GM12878 (cell line): ENCODE measurements at regions of chr7 and their contacts with region 1.

Region 1: DNA sequence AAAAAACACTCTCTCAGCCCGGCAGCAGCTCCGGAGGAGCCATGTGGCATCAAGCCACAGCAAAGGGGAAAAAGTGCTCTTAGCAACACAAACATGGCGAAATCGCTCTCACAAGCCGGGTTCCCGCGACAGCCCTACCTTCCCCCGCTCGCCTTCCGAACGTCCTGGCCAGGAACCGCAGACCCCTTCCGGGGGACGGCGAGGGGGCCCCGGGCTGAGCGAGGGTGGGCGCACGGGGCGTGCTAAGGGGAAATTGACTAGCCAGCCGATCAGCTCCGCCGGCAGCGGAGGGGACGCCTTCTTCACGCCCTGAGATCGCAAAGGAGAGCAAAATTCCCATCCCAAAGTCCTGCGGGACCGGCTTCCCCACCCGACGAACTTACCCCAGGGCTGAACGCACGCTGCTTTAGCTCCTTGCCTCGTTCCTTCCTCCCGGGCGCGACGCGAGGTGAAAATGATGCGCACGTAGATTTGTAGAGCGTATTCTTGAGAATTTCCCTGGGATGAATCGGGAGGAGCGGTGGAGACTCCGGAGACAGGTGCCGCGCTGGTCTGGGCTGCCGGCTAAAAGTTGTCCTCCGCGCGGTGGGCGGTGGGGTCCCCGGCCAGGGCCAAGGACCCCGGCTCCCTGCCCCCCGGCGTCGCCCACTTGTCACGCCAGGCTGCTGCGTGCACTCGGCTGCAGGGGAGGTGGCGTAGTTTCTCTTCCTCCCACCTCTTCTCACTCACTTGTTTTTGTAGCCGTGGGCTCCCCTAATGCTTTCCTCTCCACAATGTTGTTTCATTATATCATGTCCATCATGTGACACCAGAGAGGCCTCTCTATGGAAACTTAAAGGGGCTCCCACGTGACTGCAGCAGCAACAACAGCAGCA is 220.1 kb upstream of the MKLN1 start:
- DNase-seq: no peak
- ATAC-seq: peak; percentile 61
- H3K4me3 ChIP-seq: peak overlapping the region; percentile 90
- H3K27ac ChIP-seq: peak overlapping the region; percentile 88
- H3K4me1 ChIP-seq: peaks cover 35% of the 10 kb centered on the region
- H3K27me3 ChIP-seq: no peaks in the 10 kb centered on the region
- CTCF ChIP-seq: peak in 1 of 3 experiments; percentile 17; a peak in 1 of 6 replicates
- EP300 ChIP-seq: peak; percentile 92 to 95
- POLR2A ChIP-seq: peak; percentile 92
- RAD21 ChIP-seq: 0 out of 2 replicates have a peak, but pooled peaks have one; percentile 8

Region 2: DNA sequence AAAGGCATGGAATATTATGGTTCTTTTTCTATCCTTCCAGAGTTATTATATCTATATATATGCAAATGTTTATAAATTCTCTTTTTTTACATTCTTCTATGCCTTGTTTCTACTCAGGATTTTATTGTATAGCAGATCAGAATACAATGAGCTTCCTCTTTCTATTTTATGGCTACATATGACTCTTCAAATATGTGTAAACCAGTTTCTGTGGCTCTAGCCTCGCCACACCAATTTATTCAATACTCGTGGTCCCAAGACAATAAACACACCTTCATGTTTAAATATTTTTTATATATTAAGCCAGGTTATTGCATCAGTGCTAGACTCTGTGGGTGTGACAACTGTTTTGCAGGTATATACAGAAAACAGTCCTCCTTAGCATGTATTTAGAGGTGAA is 17.4 kb before region 1 on chr7:
- CTCF ChIA-PET with region 1: interaction called, 4 read pairs
- POLR2A ChIA-PET with region 1: interaction called, 7 read pairs
- RAD21 ChIA-PET with region 1: interaction called, 17 read pairs
- SMC1A ChIA-PET with region 1: interaction called, 11 read pairs
- in situ Hi-C with region 1: no loop called
- intact Hi-C with region 1: no loop called
- DNase-seq: no peak
- ATAC-seq: peak; percentile 55
- H3K4me3 ChIP-seq: no peak overlapping the region
- H3K27ac ChIP-seq: no peak overlapping the region
- H3K4me1 ChIP-seq: peaks cover 12% of the 10 kb centered on the region
- H3K27me3 ChIP-seq: no peaks in the 10 kb centered on the region
- CTCF ChIP-seq: no peak
- EP300 ChIP-seq: no peak
- POLR2A ChIP-seq: no peak
- RAD21 ChIP-seq: no peak

Region 3: GRCh38 chr7:131124001-131124629 is 16.5 kb after region 1 on chr7:
- CTCF ChIA-PET with region 1: interaction called, 51 read pairs
- POLR2A ChIA-PET with region 1: interaction called, 110 read pairs
- RAD21 ChIA-PET with region 1: interaction called, 136 read pairs
- SMC1A ChIA-PET with region 1: interaction called, 152 read pairs
- in situ Hi-C with region 1: no loop called
- intact Hi-C with region 1: loop called (anchors 1 kb)
- DNase-seq: peak; percentile 92
- ATAC-seq: peak; percentile 92
- H3K4me3 ChIP-seq: 0 out of 2 replicates have a peak overlapping the region, but pooled peaks have one; percentile 17
- H3K27ac ChIP-seq: peak overlapping the region; percentile 77
- H3K4me1 ChIP-seq: peaks cover 24% of the 10 kb centered on the region
- H3K27me3 ChIP-seq: no peaks in the 10 kb centered on the region
- CTCF ChIP-seq: no peak
- EP300 ChIP-seq: peak; percentile 89 to 97; a peak in 3 of 4 replicates
- POLR2A ChIP-seq: peak; percentile 60; the same call in 1 of the 2 replicates
- RAD21 ChIP-seq: no peak; the same call in 1 of the 2 replicates

Region 4: DNA sequence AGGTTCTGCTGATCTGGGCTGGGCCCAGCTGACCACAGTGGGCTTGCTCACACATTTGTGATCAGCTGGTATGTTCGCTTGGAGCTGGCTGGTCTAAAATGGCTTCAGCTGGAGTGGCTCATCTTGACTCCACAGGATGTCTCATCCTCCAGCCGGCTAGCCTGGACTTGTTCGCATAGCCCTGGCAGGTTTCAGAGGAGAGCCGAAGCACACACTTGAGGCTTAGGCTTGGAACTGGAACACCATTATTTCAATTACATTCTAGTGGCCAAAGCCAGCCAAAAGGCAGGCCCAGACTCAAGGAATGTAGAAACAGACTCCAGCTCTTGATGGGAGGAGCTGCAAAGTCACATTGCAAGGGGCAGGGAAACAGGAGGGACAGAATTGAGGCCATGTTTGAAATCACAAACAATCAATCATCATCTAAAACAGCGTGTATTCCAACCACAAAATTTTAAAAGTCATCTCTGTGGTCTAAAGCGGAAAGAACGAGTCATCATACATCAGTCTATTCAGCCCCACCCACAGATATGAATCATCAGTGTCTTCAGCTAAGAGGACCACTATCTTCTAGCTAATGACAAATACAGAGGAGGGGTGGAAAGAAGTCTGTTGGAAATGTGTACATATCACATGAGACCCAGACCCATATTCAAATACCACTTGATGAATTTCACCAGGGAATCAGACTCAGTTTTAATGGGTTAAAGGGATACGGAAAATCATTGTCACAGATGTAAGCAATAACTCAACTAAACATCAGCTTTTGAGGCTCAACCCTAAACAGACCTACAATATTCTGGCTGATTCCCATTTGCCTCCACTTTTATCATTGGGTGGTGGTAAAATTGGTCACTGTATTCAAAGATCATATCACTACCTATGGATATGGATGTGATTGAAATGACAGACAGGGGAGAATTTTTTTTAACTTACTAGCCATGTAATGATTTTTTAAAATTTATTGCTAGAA is 81.1 kb after region 1 on chr7:
- CTCF ChIA-PET with region 1: interaction called, 4 read pairs
- POLR2A ChIA-PET with region 1: interaction called, 6 read pairs
- RAD21 ChIA-PET with region 1: interaction called, 30 read pairs
- SMC1A ChIA-PET with region 1: interaction called, 8 read pairs
- in situ Hi-C with region 1: no loop called
- intact Hi-C with region 1: no loop called
- DNase-seq: peak; percentile 61
- ATAC-seq: peak; percentile 97
- H3K4me3 ChIP-seq: no peak overlapping the region
- H3K27ac ChIP-seq: no peak overlapping the region
- H3K4me1 ChIP-seq: peaks cover 13% of the 10 kb centered on the region
- H3K27me3 ChIP-seq: no peaks in the 10 kb centered on the region
- CTCF ChIP-seq: no peak
- EP300 ChIP-seq: peak in 1 of 2 experiments; percentile 58; a peak in 1 of 4 replicates
- POLR2A ChIP-seq: no peak
- RAD21 ChIP-seq: no peak

Region 5: DNA sequence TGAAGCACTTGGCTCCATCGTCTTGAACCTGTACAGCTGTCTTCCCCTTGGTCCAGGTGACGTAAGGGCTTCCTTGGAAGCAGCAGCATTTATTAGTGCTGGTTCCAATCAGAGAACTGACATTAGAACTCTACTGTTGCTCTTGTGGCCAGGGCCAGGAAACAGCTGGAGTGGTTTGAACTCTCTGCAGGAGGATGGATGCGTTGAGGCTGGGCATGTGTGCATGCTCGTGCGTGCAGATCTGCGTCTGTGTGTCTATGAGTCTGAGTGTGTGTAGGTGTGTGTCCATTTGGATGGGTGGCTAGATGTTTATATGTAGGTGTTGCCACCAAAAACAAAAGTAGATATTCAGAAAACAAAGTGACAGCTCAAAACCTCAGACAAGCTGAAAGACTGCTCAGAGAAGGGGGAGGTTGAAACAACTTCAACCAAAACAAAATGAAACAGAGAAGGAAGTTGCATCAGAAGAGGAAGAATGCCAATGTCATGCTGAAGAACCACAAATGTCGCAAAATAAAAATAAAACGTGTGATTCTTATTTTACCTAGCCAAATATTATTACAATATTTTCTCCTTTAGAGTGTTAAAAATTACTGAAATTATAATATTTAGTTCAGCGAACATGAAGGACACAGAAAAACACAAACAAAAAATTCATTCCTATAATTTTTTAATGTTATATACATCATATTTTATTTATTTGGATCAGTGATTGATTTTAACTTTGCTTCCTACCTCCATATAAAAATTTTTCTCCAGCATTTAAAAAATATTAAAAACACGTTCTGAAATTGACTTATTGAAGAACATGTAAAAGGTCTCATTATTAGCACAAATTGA is 124.0 kb after region 1 on chr7:
- CTCF ChIA-PET with region 1: interaction called, 5 read pairs
- POLR2A ChIA-PET with region 1: interaction called, 3 read pairs
- RAD21 ChIA-PET with region 1: interaction called, 11 read pairs
- SMC1A ChIA-PET with region 1: interaction called, 10 read pairs
- in situ Hi-C with region 1: no loop called
- intact Hi-C with region 1: loop called (anchors 5 kb)
- DNase-seq: peak; percentile 82
- ATAC-seq: peak; percentile 90
- H3K4me3 ChIP-seq: 0 out of 2 replicates have a peak overlapping the region, but pooled peaks have one; percentile 44
- H3K27ac ChIP-seq: peak overlapping the region; percentile 47
- H3K4me1 ChIP-seq: peaks cover 3% of the 10 kb centered on the region; the same call in 1 of the 2 replicates
- H3K27me3 ChIP-seq: no peaks in the 10 kb centered on the region
- CTCF ChIP-seq: no peak
- EP300 ChIP-seq: peak; percentile 60 to 80; a peak in 2 of 4 replicates
- POLR2A ChIP-seq: peak; percentile 65; the same call in 1 of the 2 replicates
- RAD21 ChIP-seq: peak; percentile 3; the same call in 1 of the 2 replicates

Region 6: GRCh38 chr7:131327626-131328376 is 220.2 kb after region 1 on chr7 and contains the start of gene MKLN1:
- CTCF ChIA-PET with region 1: interaction called, 3 read pairs
- POLR2A ChIA-PET with region 1: interaction called, 12 read pairs
- RAD21 ChIA-PET with region 1: interaction called, 11 read pairs
- SMC1A ChIA-PET with region 1: interaction called, 12 read pairs
- in situ Hi-C with region 1: no loop called
- intact Hi-C with region 1: loop called (anchors 5 kb)
- DNase-seq: peak; percentile 35
- ATAC-seq: peak; percentile 95
- H3K4me3 ChIP-seq: peak within 1 kb of the TSS; percentile 88
- H3K27ac ChIP-seq: peak within 1 kb of the TSS; percentile 97
- H3K4me1 ChIP-seq: 0 out of 2 replicates have a peak, but pooled peaks cover 3% of the 10 kb centered on the region
- H3K27me3 ChIP-seq: no peaks in the 10 kb centered on the region
- CTCF ChIP-seq: no peak
- EP300 ChIP-seq: peak in 1 of 2 experiments; percentile 22; a peak in 1 of 4 replicates
- POLR2A ChIP-seq: peak; percentile 99
- RAD21 ChIP-seq: no peak
- polyA plus RNA-seq, gene MKLN1: 16.4 to 31.8 TPM